ENCODE measurements at regions of chr15 and their contacts with region 1.

Region 1: DNA sequence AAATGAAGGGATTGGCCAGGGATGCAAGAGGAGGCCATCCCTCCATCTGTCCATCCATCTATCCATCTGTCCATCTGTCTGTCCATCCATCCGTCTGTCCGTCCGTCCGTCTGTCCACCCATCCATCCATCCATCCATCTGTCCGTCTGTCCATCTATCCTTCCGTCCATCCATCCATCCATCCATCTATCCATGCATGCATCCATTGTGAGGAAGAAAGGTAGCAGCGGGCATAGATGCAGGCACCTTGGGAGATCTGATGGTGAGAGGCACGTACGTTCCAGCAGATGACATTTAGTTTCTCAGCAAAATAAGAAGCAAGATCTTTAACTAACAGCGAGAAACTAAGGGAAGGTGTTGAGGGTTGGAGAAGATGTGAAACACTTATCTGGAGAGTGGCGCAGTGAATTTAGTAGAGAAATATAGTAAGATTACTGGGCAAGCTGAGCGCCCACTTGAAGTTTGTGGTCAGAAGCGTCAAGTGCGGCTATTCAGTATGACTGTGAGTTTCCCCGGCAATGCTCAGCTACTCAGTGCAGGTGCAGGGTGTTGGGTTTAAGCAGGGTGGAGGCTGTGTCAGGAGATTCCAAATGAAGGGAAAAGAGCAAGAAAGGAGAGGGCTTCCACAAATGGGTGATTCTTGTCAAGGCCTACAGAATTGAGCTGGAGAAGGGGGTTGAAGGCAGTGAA is 22.4 kb upstream of the SRP14 start:
- DNase-seq: peak; percentile 57
- H3K4me3 Mint-ChIP-seq: no peak overlapping the region
- H3K27ac Mint-ChIP-seq: no peak overlapping the region
- H3K4me1 Mint-ChIP-seq: peaks cover 32% of the 10 kb centered on the region
- H3K27me3 Mint-ChIP-seq: no peaks in the 10 kb centered on the region

Region 2: GRCh38 chr15:40002295-40002694 is 59.1 kb before region 1 on chr15:
- CTCF ChIA-PET with region 1: no interaction called
- POLR2A ChIA-PET with region 1: no interaction called
- DNase-seq: no peak
- H3K4me3 Mint-ChIP-seq: no peak overlapping the region
- H3K27ac Mint-ChIP-seq: no peak overlapping the region
- H3K4me1 Mint-ChIP-seq: peaks cover 5% of the 10 kb centered on the region
- H3K27me3 Mint-ChIP-seq: no peaks in the 10 kb centered on the region

Region 3: DNA sequence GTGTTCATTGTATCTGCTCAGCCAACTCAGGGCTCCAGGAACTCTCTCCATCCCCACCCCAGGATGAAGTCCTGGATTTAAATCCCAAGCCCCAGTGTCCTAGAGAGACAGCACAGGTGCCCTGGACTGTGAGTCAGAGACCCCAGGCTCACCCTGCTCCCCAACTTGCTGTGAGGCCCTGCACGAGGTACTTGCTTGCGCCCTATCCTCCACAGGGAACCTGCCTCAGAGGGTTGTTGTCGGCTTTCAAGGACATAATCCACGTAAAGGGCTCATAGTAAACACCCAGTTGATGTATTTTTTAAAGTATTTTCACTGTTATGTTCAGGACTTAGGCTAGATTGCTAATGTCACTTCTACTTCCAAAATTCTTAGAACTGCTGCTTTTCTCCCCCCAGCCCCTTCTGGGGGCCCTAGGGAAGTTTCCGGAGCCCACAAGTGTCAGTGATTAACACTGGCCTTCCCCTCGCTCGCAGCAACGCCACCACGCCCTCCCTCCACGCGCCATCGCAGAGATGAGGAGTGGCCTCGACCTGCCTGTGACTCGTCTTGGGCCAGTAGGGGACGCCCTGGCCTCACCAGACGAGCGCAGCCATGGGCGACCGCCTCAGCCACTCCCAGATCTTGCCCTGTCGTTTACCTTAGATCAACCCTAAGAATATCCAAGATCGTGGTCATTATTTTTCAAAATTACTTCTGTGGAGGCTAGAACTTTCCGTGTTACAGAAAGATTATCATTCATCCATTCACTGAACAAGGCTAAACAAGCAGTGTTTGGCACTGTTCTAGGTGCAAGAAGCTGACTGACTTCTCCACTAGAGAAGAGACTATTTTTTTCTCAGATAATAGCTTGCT is 16.4 kb before region 1 on chr15:
- CTCF ChIA-PET with region 1: interaction called, 5 read pairs
- POLR2A ChIA-PET with region 1: interaction called, 19 read pairs
- DNase-seq: peak; percentile 88
- H3K4me3 Mint-ChIP-seq: no peak overlapping the region
- H3K27ac Mint-ChIP-seq: peak overlapping the region; percentile 47
- H3K4me1 Mint-ChIP-seq: peaks cover 77% of the 10 kb centered on the region
- H3K27me3 Mint-ChIP-seq: no peaks in the 10 kb centered on the region

Measured in activated CD4-positive, alpha-beta memory T cell treated with anti-CD3 and anti-CD28 coated beads, Interleukin-2, amount 10 ng/mL, durations not matched to agents 7 days and 5 days (primary cell).